PC-3 (cell line): ENCODE measurements at regions of chr7 and their contacts with region 1.

Region 1: DNA sequence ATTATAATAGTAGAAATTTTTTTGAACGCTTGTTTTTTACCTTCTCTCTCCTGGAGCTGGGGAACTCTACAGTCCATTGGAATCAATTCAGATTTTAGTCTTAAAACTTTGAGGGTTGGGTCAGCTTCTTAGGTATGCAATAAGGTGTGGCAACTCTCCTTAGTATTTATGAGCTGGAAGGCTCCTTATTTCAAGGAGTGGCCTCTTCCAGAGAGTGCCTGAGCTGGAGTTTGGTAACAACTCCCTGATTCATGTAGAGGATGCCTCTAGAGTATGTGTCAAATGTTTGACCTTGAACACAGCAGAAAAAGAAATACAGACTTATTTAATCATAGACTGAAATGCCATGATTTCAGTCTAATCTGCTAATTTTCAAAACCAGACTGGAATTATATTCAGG is 11.1 kb downstream of the CDK14 start:
- DNase-seq: peak; percentile 49
- ATAC-seq: peak; percentile 99
- H3K4me3 ChIP-seq: no peak overlapping the region
- H3K27ac ChIP-seq: no peak overlapping the region
- H3K4me1 ChIP-seq: peaks cover 12% of the 10 kb centered on the region
- H3K27me3 ChIP-seq: no peaks in the 10 kb centered on the region
- CTCF ChIP-seq: no peak

Region 2: GRCh38 chr7:90188281-90188680 is 418.9 kb before region 1 on chr7:
- CTCF ChIA-PET with region 1: no interaction called
- POLR2A ChIA-PET with region 1: no interaction called
- intact Hi-C with region 1: no loop called
- DNase-seq: no peak
- ATAC-seq: peak; percentile 33; the same call in 1 of the 2 replicates
- H3K4me3 ChIP-seq: no peak overlapping the region
- H3K27ac ChIP-seq: no peak overlapping the region
- H3K4me1 ChIP-seq: no peaks in the 10 kb centered on the region; the same call in 1 of the 2 replicates
- H3K27me3 ChIP-seq: no peaks in the 10 kb centered on the region
- CTCF ChIP-seq: no peak

Region 3: GRCh38 chr7:90262438-90262837 is 344.8 kb before region 1 on chr7:
- CTCF ChIA-PET with region 1: no interaction called
- POLR2A ChIA-PET with region 1: no interaction called
- intact Hi-C with region 1: no loop called
- DNase-seq: peak; percentile 70
- ATAC-seq: peak; percentile 82
- H3K4me3 ChIP-seq: no peak overlapping the region
- H3K27ac ChIP-seq: no peak overlapping the region
- H3K4me1 ChIP-seq: peaks cover 9% of the 10 kb centered on the region
- H3K27me3 ChIP-seq: no peaks in the 10 kb centered on the region
- CTCF ChIP-seq: peak; percentile 57

Region 4: DNA sequence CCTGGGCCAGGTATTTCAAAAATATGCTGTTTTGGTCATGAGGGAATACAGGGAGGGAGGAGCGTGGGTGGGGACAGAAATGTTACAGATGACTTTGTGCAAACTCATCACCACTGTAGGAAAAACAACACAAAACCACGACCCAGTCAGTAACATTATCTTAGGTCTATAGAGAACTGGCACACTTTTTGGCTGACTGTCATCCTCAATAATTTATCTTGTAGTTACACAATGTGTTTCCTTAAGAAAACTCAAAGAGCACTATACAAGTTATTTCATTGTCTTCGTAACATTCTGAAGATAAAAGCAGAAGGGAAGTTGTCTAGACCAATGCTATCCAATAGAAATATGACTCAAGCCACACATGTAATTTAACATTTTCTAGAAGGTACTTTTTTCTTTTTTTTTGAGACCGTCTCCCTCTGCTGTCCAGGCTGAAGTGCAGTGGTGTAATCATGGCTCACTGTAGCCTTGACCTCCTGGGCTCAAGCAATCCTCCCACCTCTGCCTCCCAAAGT is 28.0 kb before region 1 on chr7:
- CTCF ChIA-PET with region 1: no interaction called
- POLR2A ChIA-PET with region 1: no interaction called
- intact Hi-C with region 1: loop called (anchors 1 kb)
- DNase-seq: peak; percentile 81
- ATAC-seq: peak; percentile 77
- H3K4me3 ChIP-seq: no peak overlapping the region
- H3K27ac ChIP-seq: peak overlapping the region; percentile 35
- H3K4me1 ChIP-seq: peaks cover 14% of the 10 kb centered on the region
- H3K27me3 ChIP-seq: no peaks in the 10 kb centered on the region
- CTCF ChIP-seq: no peak; the same call in 1 of the 2 replicates

Region 5: DNA sequence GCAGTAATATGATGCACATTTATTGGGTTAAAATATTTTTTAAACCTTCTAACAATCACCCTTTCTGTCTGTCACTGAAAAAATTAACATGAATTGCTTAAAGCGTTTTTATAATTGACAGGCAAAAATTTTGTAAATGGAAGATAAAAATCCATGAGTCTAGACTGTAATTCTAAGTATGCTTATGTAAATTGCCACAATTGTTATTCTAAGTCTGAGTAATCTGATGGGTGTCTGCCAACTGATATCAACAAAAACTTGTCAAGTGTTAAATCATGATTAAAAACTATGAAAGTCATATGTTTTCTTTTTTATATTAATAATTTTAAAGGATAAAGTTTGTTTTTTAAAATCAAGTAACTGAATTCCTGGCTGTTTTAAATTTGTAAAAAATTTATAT is 197.2 kb after region 1 on chr7:
- CTCF ChIA-PET with region 1: no interaction called
- POLR2A ChIA-PET with region 1: no interaction called
- intact Hi-C with region 1: no loop called
- DNase-seq: no peak
- ATAC-seq: no peak
- H3K4me3 ChIP-seq: no peak overlapping the region
- H3K27ac ChIP-seq: no peak overlapping the region
- H3K4me1 ChIP-seq: no peaks in the 10 kb centered on the region
- H3K27me3 ChIP-seq: no peaks in the 10 kb centered on the region
- CTCF ChIP-seq: no peak